Upper lobe of right lung (tissue), 1 donor: ENCODE measurements at regions of chr19 and their contacts with region 1.

Region 1: GRCh38 chr19:3434712-3435553 is 45.4 kb downstream of the SMIM24 start:
- DNase-seq: peak; percentile 98
- ATAC-seq: peak; percentile 99
- H3K4me3 ChIP-seq: peak overlapping the region; percentile 55
- H3K27ac ChIP-seq: peak overlapping the region; percentile 84
- H3K4me1 ChIP-seq: peaks cover 20% of the 10 kb centered on the region
- H3K27me3 ChIP-seq: no peaks in the 10 kb centered on the region
- CTCF ChIP-seq: no peak

Region 2: DNA sequence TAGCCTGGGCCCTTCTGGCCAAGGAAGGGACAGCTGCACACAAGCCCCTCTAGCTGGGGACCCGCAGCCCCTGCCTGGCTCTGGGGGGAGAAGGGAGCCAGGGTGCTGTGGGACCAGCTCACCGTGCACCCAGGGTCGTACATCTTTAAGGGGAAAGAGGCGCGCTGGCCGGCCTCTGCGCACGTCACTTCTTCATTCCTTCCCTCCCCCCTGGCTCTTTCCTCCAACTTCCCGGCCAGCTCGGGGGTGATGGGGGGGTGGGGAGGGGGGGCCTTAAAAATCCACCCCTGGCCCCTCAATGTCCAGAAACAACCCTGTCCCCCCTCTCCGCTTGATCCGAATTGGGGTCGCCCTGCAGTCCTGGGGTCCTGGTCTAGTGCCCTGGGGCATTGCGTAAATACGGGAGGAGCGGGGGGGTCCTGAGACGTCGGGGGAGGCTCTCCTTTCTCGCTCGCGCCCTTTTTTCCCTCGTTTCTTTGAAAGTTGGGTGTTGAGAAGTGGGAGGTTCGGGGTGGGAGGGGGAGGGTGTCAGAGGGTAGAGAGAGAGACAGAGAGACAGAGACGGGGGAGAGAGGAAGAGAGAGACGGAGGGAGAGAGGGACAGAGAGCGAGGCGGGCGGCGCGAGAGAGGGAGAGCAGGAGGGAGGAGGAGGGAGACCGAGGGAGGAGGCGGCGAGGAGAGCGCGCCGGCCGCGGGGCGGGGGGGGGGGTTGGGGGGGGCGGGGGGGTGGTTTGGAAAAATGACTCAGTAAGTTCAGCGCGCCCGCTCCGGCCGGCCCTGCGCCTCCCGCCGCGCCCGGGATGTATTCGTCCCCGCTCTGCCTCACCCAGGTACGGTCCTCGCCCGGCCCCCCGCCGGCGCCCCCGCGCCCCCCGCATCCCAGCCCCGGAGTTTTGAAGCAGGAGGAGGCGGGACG is 68.8 kb before region 1 on chr19 and contains the start of gene NFIC:
- intact Hi-C with region 1: loop called (anchors 10 kb)
- DNase-seq: peak; percentile 90
- ATAC-seq: peak; percentile 76
- H3K4me3 ChIP-seq: peak within 1 kb of the TSS; percentile 78
- H3K27ac ChIP-seq: peak within 1 kb of the TSS; percentile 93
- H3K4me1 ChIP-seq: peaks cover 33% of the 10 kb centered on the region
- H3K27me3 ChIP-seq: no peaks in the 10 kb centered on the region
- CTCF ChIP-seq: no peak
- total RNA-seq, gene NFIC: 150 TPM

Region 3: GRCh38 chr19:3471954-3472655 is 37.2 kb after region 1 on chr19:
- intact Hi-C with region 1: no loop called
- DNase-seq: peak; percentile 77
- ATAC-seq: peak; percentile 66
- H3K4me3 ChIP-seq: no peak overlapping the region
- H3K27ac ChIP-seq: no peak overlapping the region
- H3K4me1 ChIP-seq: no peaks in the 10 kb centered on the region
- H3K27me3 ChIP-seq: no peaks in the 10 kb centered on the region
- CTCF ChIP-seq: peak; percentile 82